ENCODE measurements at regions of chr17 and their contacts with region 1.

Region 1: GRCh38 chr17:61551255-61551742 is 39.7 kb downstream of the NACA2 start:
- DNase-seq: no peak
- ATAC-seq: peak; percentile 47
- H3K4me3 ChIP-seq: no peak overlapping the region
- H3K27ac ChIP-seq: no peak overlapping the region
- H3K4me1 ChIP-seq: no peaks in the 10 kb centered on the region
- H3K27me3 ChIP-seq: no peaks in the 10 kb centered on the region
- CTCF ChIP-seq: peak; percentile 48 to 63 (median 52); a peak in 5 of 6 replicates
- EP300 ChIP-seq: no peak
- POLR2A ChIP-seq: no peak
- RAD21 ChIP-seq: peak; percentile 75

Region 2: DNA sequence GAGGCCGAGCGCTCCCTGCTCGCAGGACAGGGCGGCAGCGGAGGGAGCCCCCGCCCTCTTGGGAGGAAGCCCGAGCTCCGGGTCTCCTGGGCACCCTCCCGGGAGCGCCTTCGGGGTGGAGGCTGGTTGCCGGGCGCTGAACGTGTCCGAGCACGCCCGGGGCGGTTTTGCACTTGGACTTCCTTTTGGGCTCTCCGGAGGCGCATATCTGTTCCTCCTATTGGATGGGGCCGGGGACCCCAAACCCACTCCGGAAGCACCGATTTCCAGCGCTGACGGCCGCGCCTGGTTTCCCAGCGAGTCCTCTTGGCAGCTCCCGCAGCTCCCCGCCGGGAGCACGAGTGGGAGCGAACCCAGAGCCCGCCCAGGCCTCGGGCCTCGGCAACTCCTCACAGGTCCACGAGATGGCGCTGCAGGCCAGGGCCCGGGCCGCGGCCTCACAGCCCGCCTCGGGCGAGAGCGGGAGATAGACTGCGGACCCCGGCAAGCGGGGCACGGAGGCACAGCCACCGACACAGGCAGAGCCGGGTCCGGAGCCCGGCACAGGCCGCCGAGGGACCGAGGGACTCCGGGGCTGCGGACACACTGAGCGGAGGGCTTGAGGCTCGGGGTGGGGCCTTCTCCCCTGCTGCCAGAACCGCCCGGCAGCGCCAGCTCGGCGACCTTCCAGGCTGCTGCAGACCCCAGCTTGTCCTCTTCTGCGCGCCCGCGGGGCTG is 139.0 kb before region 1 on chr17:
- CTCF ChIA-PET with region 1: interaction called, 4 read pairs
- POLR2A ChIA-PET with region 1: no interaction called
- RAD21 ChIA-PET with region 1: interaction called, 7 read pairs
- SMC1A ChIA-PET with region 1: no interaction called
- in situ Hi-C with region 1: no loop called
- intact Hi-C with region 1: loop called (anchors 1 kb)
- DNase-seq: peak; percentile 5
- ATAC-seq: peak; percentile 83
- H3K4me3 ChIP-seq: peak overlapping the region; percentile 54; the same call in 1 of the 2 replicates
- H3K27ac ChIP-seq: no peak overlapping the region
- H3K4me1 ChIP-seq: peaks cover 4% of the 10 kb centered on the region; the same call in 1 of the 2 replicates
- H3K27me3 ChIP-seq: peaks cover 17 to 34% of the 10 kb centered on the region in 2 experiments
- CTCF ChIP-seq: peak; percentile 83 to 94 (median 87)
- EP300 ChIP-seq: no peak
- POLR2A ChIP-seq: no peak
- RAD21 ChIP-seq: peak; percentile 89

Region 3: DNA sequence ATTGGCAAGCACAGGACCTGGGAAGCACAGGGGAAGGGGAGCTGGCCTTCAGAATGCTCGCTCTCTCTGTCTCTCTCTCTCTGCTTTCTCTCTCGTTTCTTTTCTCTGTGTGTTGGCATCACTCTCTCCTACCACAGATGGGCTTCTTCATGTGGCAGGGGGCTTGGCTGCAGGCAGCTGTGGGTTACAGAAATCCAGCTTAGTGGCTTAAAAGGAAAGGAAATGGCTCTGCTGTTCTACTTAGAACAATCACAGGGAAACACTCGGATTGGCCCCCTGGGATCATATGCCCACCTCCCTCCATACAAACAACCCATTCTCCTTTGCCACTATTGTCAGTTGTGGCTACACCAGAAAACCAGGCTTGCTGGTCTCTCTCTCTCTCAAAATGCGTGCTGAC is 131.2 kb before region 1 on chr17:
- CTCF ChIA-PET with region 1: interaction called, 4 read pairs
- POLR2A ChIA-PET with region 1: no interaction called
- RAD21 ChIA-PET with region 1: no interaction called
- SMC1A ChIA-PET with region 1: interaction called, 3 read pairs
- in situ Hi-C with region 1: loop called (anchors 5 kb)
- intact Hi-C with region 1: loop called (anchors 1 kb)
- DNase-seq: no peak
- ATAC-seq: no peak
- H3K4me3 ChIP-seq: no peak overlapping the region
- H3K27ac ChIP-seq: no peak overlapping the region
- H3K4me1 ChIP-seq: no peaks in the 10 kb centered on the region
- H3K27me3 ChIP-seq: peaks cover 0 to 2% of the 10 kb centered on the region in 2 experiments; a peak in 1 of 4 replicates
- CTCF ChIP-seq: no peak
- EP300 ChIP-seq: no peak
- POLR2A ChIP-seq: no peak
- RAD21 ChIP-seq: no peak

Region 4: GRCh38 chr17:61517843-61518606 is 33.3 kb before region 1 on chr17:
- CTCF ChIA-PET with region 1: no interaction called
- POLR2A ChIA-PET with region 1: no interaction called
- RAD21 ChIA-PET with region 1: no interaction called
- SMC1A ChIA-PET with region 1: no interaction called
- in situ Hi-C with region 1: no loop called
- intact Hi-C with region 1: no loop called
- DNase-seq: no peak
- ATAC-seq: no peak
- H3K4me3 ChIP-seq: no peak overlapping the region
- H3K27ac ChIP-seq: no peak overlapping the region
- H3K4me1 ChIP-seq: no peaks in the 10 kb centered on the region
- H3K27me3 ChIP-seq: no peaks in the 10 kb centered on the region
- CTCF ChIP-seq: no peak
- EP300 ChIP-seq: no peak
- POLR2A ChIP-seq: no peak
- RAD21 ChIP-seq: no peak

Measured in GM12878 (cell line).